Activated B cell treated with CpG ODN at 0.5 μM for 24 hours (primary cell): ENCODE measurements at regions of chr10 and their contacts with region 1.

Region 1: DNA sequence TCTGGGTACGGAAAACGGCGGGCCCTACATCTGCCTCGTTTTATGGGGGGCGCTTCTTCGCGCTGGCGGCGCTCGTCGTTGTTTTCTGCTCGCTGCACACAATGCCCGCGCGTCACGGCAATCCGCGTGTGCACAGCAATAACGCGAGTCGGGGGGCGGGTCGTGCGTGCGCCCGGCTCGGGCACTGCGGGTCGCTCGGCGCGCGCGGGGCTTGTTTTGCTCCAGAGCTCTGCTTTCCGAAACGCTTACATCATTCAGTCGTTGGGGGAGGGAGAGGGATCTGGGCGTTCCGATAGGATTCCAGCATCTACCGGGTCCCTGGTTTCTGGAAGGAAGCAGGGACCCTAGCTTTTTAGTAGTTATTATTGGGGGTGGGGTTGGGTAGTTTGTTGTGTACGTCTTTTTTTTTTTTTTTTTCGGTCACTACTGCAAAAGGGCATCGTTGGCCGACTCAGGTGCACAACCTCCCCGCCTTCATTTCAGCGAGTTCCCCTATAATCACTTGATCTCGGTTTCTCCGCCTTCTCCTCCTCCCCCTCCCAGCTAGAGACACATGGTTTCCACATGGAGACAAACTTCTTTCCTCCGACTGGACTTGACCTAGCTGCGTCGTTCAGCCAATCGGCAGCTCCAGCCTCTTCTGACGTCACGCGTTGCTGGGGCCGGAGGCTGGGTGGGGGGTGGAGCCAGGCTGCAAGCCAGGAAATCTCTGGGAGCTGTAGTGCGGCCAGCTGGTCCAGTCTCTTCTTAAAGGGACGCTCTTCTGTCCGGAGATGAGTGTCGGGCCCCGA is 3.5 kb downstream of the MXI1 start:
- DNase-seq: peak; percentile 84
- ATAC-seq: peak; percentile 73
- H3K4me3 Mint-ChIP-seq: peak overlapping the region; percentile 87
- H3K27ac Mint-ChIP-seq: peak overlapping the region; percentile 79
- H3K4me1 Mint-ChIP-seq: peaks cover 55% of the 10 kb centered on the region
- H3K27me3 Mint-ChIP-seq: peaks cover 2% of the 10 kb centered on the region
- CTCF ChIP-seq: no peak

Region 2: DNA sequence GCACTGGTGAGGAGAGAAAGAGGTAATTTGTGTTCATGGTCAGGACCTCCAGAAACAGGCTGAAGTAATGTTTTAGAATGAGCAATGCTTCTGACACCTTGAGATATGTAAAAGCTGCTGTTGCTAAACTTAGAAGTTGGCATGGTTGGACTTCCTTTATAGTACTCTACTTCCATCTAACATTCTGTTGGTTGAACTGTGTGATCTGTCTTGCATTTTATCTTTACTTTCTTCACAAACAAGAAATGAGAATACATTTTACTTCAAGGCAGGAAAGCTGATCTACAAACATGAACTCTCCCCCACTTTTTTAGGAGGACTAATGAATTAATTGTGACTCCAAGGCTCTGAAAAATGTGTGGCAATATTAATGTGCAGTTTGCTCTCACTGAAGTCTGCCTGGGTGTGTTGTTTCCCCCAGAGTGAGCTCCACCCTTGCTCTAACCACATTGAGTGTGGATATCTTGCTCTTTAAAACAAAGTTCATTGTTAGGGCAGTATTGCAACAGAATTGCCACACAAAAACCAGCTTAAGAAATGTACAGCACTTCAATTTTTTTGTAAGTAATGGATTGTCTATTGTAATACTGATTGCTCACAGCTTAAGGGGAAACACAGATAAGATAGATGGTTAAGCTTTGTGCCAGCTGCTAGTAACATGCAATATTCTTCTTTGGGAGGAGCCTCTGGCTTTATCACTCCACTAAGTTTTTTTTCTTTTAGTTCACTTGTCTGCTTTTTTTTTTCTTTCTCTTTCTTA is 134.1 kb before region 1 on chr10:
- CTCF ChIA-PET with region 1: no interaction called
- POLR2A ChIA-PET with region 1: interaction called, 3 read pairs
- intact Hi-C with region 1: loop called (anchors 5 kb)
- DNase-seq: no peak
- ATAC-seq: peak; percentile 59
- H3K4me3 Mint-ChIP-seq: peak overlapping the region; percentile 85
- H3K27ac Mint-ChIP-seq: peak overlapping the region; percentile 99
- H3K4me1 Mint-ChIP-seq: peaks cover 84% of the 10 kb centered on the region
- H3K27me3 Mint-ChIP-seq: no peaks in the 10 kb centered on the region
- CTCF ChIP-seq: no peak

Region 3: GRCh38 chr10:110151986-110152385 is 58.9 kb before region 1 on chr10:
- CTCF ChIA-PET with region 1: interaction called, 4 read pairs
- POLR2A ChIA-PET with region 1: interaction called, 19 read pairs
- intact Hi-C with region 1: loop called (anchors 2 kb)
- DNase-seq: no peak
- ATAC-seq: no peak
- H3K4me3 Mint-ChIP-seq: no peak overlapping the region
- H3K27ac Mint-ChIP-seq: no peak overlapping the region
- H3K4me1 Mint-ChIP-seq: peaks cover 60% of the 10 kb centered on the region
- H3K27me3 Mint-ChIP-seq: peaks cover 33% of the 10 kb centered on the region
- CTCF ChIP-seq: no peak

Region 4: GRCh38 chr10:110192552-110192951 is 18.3 kb before region 1 on chr10:
- CTCF ChIA-PET with region 1: interaction called, 3 read pairs
- POLR2A ChIA-PET with region 1: interaction called, 7 read pairs
- intact Hi-C with region 1: loop called (anchors 2 kb)
- DNase-seq: no peak
- ATAC-seq: no peak
- H3K4me3 Mint-ChIP-seq: no peak overlapping the region
- H3K27ac Mint-ChIP-seq: no peak overlapping the region
- H3K4me1 Mint-ChIP-seq: no peaks in the 10 kb centered on the region
- H3K27me3 Mint-ChIP-seq: peaks cover 40% of the 10 kb centered on the region
- CTCF ChIP-seq: no peak

Region 5: DNA sequence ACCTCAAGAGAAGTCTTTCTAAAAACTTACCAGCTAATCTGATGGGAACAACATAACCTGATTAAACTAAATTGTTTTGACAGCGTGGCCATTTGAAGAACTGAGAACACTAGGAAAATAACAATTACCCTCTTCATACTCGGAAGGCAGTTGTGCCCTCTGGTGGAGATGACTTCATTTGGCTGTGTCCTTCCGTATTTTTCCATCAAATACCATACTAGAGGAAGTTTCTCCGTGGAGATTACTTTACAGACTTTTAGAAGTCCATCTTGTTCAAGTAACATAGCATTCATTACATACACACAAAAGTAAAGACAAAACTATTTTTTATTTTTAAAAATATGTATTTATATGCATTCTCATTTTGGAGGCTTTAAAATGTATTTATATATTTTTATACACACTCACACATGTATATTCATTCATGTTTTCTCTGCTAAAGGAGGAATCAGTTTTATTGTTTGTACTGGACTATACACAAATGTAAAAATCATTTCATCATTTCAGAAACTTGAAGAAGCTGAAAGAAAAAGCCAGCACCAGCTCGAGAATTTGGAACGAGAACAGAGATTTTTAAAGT is 68.6 kb after region 1 on chr10:
- CTCF ChIA-PET with region 1: interaction called, 40 read pairs
- POLR2A ChIA-PET with region 1: interaction called, 4 read pairs
- intact Hi-C with region 1: loop called (anchors 1 kb)
- DNase-seq: no peak
- ATAC-seq: peak; percentile 68
- H3K4me3 Mint-ChIP-seq: peak overlapping the region; percentile 38
- H3K27ac Mint-ChIP-seq: no peak overlapping the region
- H3K4me1 Mint-ChIP-seq: peaks cover 24% of the 10 kb centered on the region
- H3K27me3 Mint-ChIP-seq: no peaks in the 10 kb centered on the region
- CTCF ChIP-seq: peak; percentile 92

Region 6: DNA sequence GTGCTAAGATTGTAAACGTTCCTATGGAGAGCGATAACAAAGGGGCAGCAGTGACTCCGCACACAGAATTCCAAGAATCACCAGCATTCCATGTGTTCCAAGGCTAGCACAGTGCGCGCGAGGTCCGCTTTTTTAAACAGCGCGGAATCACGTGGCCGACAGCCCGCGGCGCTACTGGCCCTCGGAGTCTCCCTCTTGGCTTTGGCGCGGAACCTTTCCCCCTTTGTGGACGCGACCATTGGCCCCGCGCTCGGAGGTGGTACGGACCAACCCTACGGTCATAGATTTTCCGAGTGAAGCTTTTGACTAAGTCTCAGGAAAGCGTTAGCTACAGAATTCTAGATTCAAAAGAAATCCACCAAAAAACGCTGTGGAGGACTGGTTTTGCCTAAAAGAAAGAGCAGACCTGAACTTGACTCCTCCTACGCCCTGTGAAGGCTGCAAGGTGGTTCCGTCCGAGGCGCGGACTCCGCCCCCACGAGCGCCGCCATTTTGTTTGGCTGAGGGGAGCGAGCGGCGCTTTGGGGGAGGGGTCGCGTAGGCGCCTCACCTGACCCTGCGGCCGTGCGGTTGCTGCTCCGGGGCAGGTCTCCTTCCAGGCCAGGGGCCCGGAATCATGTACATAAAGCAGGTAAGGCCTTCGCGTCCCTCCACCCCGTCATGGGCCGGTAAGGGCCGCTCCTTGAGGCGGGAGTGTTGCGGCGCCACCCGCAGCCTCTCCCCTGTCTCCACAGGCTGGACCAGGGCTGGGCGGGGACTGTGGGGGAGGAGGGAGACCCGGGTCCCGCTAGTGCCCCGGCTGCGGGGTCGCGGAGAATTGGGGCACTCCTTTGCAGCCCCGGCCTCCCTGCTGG is 356.6 kb after region 1 on chr10 and contains the start of gene SMC3:
- CTCF ChIA-PET with region 1: no interaction called
- POLR2A ChIA-PET with region 1: no interaction called
- intact Hi-C with region 1: loop called (anchors 5 kb)
- DNase-seq: peak; percentile 89
- ATAC-seq: peak; percentile 88
- H3K4me3 Mint-ChIP-seq: peak within 1 kb of the TSS; percentile 91
- H3K27ac Mint-ChIP-seq: peak within 1 kb of the TSS; percentile 98
- H3K4me1 Mint-ChIP-seq: peaks cover 41% of the 10 kb centered on the region
- H3K27me3 Mint-ChIP-seq: no peaks in the 10 kb centered on the region
- CTCF ChIP-seq: no peak
- total RNA-seq, gene SMC3: 41.1 and 43.3 TPM in 2 replicates